Endothelial cell of umbilical vein (primary cell): ENCODE measurements at regions of chr11 and their contacts with region 1.

Region 1: DNA sequence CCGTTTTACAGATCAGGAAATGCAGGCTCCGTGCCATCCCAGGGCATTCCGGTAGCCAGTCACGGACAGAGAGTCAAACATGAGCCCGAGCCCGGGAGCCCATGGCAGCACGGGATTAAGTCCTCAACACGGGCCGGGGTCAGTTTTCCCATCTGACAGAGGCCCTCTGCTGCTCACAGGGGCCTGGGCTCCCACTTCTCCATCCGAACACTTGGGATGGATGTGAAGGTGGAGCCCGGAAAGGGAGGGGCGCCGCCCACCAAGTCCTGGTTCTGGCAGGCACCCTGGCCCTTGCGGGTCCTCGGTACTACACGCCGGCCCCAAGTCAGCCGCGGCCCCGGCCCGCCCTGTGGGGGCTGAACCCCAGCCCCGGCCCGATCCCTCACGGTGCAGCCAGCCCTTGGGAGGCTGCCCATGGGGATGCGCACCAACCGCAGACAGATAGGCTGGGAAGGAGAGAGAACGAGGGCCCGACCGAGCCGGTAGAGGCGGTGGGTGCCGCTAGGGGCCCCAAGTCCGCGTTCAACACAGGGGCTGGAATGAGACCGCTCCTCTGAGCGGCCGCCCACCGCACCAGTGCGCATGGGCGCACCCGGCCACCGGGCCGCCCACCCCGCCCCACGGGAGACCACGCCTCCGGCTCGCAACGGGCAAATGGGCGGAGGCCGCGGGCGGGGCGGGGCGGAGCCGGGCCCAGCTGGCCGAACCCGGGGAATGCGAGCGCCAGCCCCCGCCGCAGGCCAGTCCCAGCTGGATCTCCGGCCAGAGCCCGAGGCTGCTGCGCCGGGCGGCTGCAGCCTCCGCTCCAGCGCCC is at the start of gene CAPN5:
- DNase-seq: peak; percentile 95
- H3K4me3 ChIP-seq: peak within 1 kb of the TSS; percentile 48 to 75 (median 62)
- H3K27ac ChIP-seq: no peak within 1 kb of the TSS
- H3K4me1 ChIP-seq: peaks cover 11% of the 10 kb centered on the region
- H3K27me3 ChIP-seq: no peaks in the 10 kb centered on the region
- CTCF ChIP-seq: peak; percentile 44 to 58
- POLR2A ChIP-seq: peak; percentile 98
- total RNA-seq, gene CAPN5: 14.3 and 15.0 TPM in 2 replicates

Region 2: GRCh38 chr11:76721755-76722677 is 344.4 kb before region 1 on chr11:
- CTCF ChIA-PET with region 1: no interaction called
- POLR2A ChIA-PET with region 1: no interaction called
- dilution Hi-C with region 1: no loop called
- intact Hi-C with region 1: no loop called
- DNase-seq: peak; percentile 77
- H3K4me3 ChIP-seq: no peak overlapping the region
- H3K27ac ChIP-seq: no peak overlapping the region
- H3K4me1 ChIP-seq: no peaks in the 10 kb centered on the region
- H3K27me3 ChIP-seq: peaks cover 20 to 24% of the 10 kb centered on the region in 2 experiments
- CTCF ChIP-seq: peak; percentile 92 to 95
- POLR2A ChIP-seq: no peak

Region 3: GRCh38 chr11:77053217-77054015 is 13.0 kb before region 1 on chr11:
- CTCF ChIA-PET with region 1: interaction called, 45 read pairs
- POLR2A ChIA-PET with region 1: no interaction called
- dilution Hi-C with region 1: no loop called
- intact Hi-C with region 1: no loop called
- DNase-seq: no peak
- H3K4me3 ChIP-seq: no peak overlapping the region
- H3K27ac ChIP-seq: no peak overlapping the region
- H3K4me1 ChIP-seq: no peaks in the 10 kb centered on the region
- H3K27me3 ChIP-seq: peaks cover 2% of the 10 kb centered on the region in 2 experiments
- CTCF ChIP-seq: no peak
- POLR2A ChIP-seq: no peak

Region 4: GRCh38 chr11:77082838-77083562 is 16.6 kb after region 1 on chr11:
- CTCF ChIA-PET with region 1: interaction called, 148 read pairs
- POLR2A ChIA-PET with region 1: interaction called, 6 read pairs
- dilution Hi-C with region 1: no loop called
- intact Hi-C with region 1: loop called (anchors 1 kb)
- DNase-seq: peak; percentile 64
- H3K4me3 ChIP-seq: peak overlapping the region in 1 of 3 experiments; percentile 5
- H3K27ac ChIP-seq: no peak overlapping the region
- H3K4me1 ChIP-seq: peaks cover 14% of the 10 kb centered on the region
- H3K27me3 ChIP-seq: no peaks in the 10 kb centered on the region
- CTCF ChIP-seq: no peak
- POLR2A ChIP-seq: no peak

Region 5: DNA sequence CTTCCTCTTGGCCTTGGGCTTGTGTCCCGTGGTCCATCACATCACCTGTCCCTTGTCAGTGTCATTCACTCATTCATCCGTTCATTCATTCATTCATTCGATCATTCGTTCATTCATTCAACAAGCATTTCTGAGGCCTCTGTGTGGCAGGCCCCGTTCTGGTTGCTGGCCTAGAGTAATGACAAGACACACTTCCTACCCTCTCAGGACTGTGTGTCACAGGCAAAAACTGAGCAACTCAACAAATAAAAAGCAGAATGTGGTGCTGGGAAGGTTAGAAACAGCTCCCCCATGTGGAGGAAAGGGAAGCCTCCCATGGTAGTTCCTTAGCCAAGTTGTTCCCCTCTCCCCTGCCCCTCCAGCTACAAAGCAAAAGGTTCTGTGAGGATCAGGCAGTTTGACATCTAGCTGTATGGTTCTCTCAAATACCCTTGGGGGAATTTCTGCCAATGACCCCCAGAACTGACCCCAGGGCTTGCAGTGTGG is 34.7 kb after region 1 on chr11:
- CTCF ChIA-PET with region 1: interaction called, 14 read pairs
- POLR2A ChIA-PET with region 1: no interaction called
- dilution Hi-C with region 1: no loop called
- intact Hi-C with region 1: no loop called
- DNase-seq: peak; percentile 30
- H3K4me3 ChIP-seq: no peak overlapping the region
- H3K27ac ChIP-seq: no peak overlapping the region
- H3K4me1 ChIP-seq: no peaks in the 10 kb centered on the region
- H3K27me3 ChIP-seq: no peaks in the 10 kb centered on the region
- CTCF ChIP-seq: peak; percentile 67 to 69
- POLR2A ChIP-seq: no peak

Region 6: DNA sequence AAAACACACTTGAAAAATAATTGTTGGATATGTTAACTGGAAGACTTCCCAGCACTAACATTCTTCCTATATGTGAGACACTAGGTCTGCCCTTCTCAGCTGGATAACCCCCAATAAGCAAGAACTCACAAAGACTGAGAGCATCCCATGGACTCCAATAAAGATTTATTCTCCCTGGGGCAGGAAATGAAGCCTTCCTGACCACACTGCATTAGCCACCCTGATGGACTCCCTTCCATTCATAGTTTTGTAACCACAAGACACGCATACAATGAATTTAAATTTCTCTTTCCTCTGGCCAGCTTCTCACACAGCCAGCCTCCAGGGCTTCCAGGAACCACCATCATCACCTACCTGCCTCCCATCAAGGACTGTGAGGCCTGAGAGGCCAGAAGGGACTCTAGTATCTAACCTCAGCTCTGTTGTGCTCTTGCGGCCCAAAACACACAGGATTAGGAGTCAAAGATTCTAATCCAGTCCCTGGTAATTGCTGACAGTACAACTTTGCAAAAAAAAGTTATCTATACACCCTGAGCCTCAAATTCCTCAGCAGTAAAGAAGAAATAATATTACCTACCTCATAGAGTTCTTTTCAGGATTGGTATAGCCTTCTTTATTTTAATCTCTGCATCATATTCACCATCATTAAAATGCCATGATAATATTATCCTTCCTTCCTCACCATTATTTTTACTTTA is 280.6 kb after region 1 on chr11:
- CTCF ChIA-PET with region 1: no interaction called
- POLR2A ChIA-PET with region 1: no interaction called
- dilution Hi-C with region 1: no loop called
- intact Hi-C with region 1: no loop called
- DNase-seq: no peak
- H3K4me3 ChIP-seq: no peak overlapping the region
- H3K27ac ChIP-seq: no peak overlapping the region
- H3K4me1 ChIP-seq: no peaks in the 10 kb centered on the region
- H3K27me3 ChIP-seq: no peaks in the 10 kb centered on the region
- CTCF ChIP-seq: no peak
- POLR2A ChIP-seq: no peak